CD14-positive monocyte (primary cell): ENCODE measurements at regions of chr6 and their contacts with region 1.

Region 1: DNA sequence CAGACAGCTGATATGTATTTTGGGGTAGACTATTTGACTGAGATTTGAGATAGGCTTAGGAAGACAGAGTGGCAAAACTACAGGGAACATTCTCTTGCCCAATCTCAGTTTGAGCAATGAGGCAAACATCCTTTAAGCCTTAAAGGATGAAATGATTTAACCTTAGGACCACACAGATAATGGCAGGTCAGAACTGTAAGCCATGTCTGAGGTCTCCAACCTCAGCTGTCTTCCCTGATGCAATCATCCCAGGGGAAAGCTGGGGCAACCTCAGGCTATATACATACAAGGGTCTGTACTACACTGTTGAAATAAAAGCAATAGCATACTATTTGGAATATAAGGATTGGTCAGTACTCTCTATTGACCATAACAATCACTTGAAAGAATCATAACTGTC is 83.8 kb upstream of the NUP153 start:
- DNase-seq: no peak
- H3K4me3 ChIP-seq: no peak overlapping the region
- H3K4me3 Mint-ChIP-seq: no peak overlapping the region
- H3K27ac ChIP-seq: no peak overlapping the region
- H3K27ac Mint-ChIP-seq: peak overlapping the region in 1 of 7 donors; percentile 13
- H3K4me1 ChIP-seq: no peaks in the 10 kb centered on the region
- H3K4me1 Mint-ChIP-seq: no peaks in the 10 kb centered on the region
- H3K27me3 ChIP-seq: no peaks in the 10 kb centered on the region
- H3K27me3 Mint-ChIP-seq: no peaks in the 10 kb centered on the region
- CTCF ChIP-seq: no peak

Region 2: DNA sequence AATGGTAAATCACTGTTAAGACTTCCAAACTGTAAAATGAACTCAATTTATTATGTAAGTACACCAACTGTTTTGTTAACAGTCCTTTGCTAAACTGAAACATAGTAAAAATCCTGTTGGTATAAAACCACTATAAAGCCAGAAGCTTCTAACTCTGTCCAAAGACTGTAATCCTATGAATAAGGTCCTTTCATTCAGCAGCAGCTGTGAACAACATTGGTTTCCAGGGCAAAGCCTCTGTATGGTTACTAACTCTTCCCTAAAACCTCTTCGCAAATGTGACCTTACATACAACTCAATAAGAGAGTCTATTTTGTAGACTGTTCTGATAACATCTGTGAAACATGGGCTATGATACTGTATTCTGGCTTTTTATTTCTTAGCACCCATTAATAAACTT is 123.8 kb before region 1 on chr6:
- intact Hi-C with region 1: loop called in 1 of 2 experiments (anchors 10 kb)
- DNase-seq: no peak
- H3K4me3 ChIP-seq: no peak overlapping the region
- H3K4me3 Mint-ChIP-seq: no peak overlapping the region
- H3K27ac ChIP-seq: no peak overlapping the region
- H3K27ac Mint-ChIP-seq: no peak overlapping the region
- H3K4me1 ChIP-seq: no peaks in the 10 kb centered on the region
- H3K4me1 Mint-ChIP-seq: no peaks in the 10 kb centered on the region
- H3K27me3 ChIP-seq: no peaks in the 10 kb centered on the region
- H3K27me3 Mint-ChIP-seq: no peaks in the 10 kb centered on the region
- CTCF ChIP-seq: no peak

Region 3: GRCh38 chr6:17957086-17957485 is 166.6 kb after region 1 on chr6:
- intact Hi-C with region 1: no loop called
- DNase-seq: no peak
- H3K4me3 ChIP-seq: no peak overlapping the region
- H3K4me3 Mint-ChIP-seq: no peak overlapping the region
- H3K27ac ChIP-seq: peak overlapping the region in 1 of 2 donors; percentile 0
- H3K27ac Mint-ChIP-seq: peak overlapping the region in 4 of 7 donors; percentile 14 to 74 (median 22)
- H3K4me1 ChIP-seq: peaks cover 0 to 2% of the 10 kb centered on the region in 2 donors
- H3K4me1 Mint-ChIP-seq: peaks cover under 1% of the 10 kb centered on the region
- H3K27me3 ChIP-seq: no peaks in the 10 kb centered on the region
- H3K27me3 Mint-ChIP-seq: peaks cover 0 to 2% (median 0%) of the 10 kb centered on the region in 3 donors
- CTCF ChIP-seq: no peak